HCT116 (cell line): ENCODE measurements at regions of chr5 and their contacts with region 1.

Region 1: DNA sequence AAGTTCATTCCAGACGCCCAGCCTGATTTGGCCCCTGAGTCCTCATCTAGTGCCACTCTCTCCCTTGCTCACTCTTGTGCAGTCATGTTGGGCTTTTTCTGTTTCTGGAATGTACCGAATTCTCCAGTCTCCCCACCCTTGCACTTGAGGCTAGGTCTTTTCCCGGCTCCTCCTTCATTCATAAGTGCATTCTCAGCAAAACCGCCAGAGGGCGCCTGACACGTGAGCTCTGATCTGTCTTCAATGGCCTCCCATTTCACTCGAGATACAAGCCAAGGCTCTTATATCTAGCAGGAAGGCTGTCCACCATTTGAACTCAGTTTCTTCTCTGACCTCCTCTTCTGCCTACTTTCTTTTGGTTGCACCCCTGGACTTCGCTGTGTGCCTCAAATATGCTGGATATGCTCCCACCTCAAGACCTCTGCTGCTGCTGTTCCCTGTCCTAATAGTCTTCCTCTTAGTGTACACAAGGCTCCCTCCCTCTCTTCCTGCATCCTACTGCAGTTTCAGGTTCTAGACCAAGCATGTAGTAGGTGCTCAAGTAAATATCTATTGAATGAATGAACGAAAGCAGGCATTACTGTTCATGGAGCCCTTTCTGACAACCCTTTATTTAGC is 568.1 kb upstream of the WWC1 start:
- DNase-seq: peak; percentile 72
- ATAC-seq: peak; percentile 98
- H3K4me3 ChIP-seq: no peak overlapping the region
- H3K27ac ChIP-seq: no peak overlapping the region
- H3K4me1 ChIP-seq: peaks cover 0 to 9% of the 10 kb centered on the region in 2 experiments; a peak in 2 of 4 replicates
- H3K27me3 ChIP-seq: no peaks in the 10 kb centered on the region
- CTCF ChIP-seq: peak; percentile 55 to 93 (median 88); a peak in 5 of 6 replicates
- POLR2A ChIP-seq: no peak
- RAD21 ChIP-seq: peak; percentile 66

Region 2: GRCh38 chr5:167699434-167699833 is 23.9 kb before region 1 on chr5:
- CTCF ChIA-PET with region 1: interaction called, 10 read pairs
- POLR2A ChIA-PET with region 1: no interaction called
- RAD21 ChIA-PET with region 1: no interaction called
- intact Hi-C with region 1: no loop called
- DNase-seq: peak; percentile 97
- ATAC-seq: peak; percentile 96
- H3K4me3 ChIP-seq: peak overlapping the region; percentile 15 to 22; a peak in 3 of 4 replicates
- H3K27ac ChIP-seq: peak overlapping the region; percentile 85; the same call in 1 of the 2 replicates
- H3K4me1 ChIP-seq: peaks cover 29 to 47% of the 10 kb centered on the region in 2 experiments
- H3K27me3 ChIP-seq: no peaks in the 10 kb centered on the region
- CTCF ChIP-seq: no peak
- POLR2A ChIP-seq: no peak
- RAD21 ChIP-seq: peak; percentile 32; the same call in 1 of the 2 replicates

Region 3: DNA sequence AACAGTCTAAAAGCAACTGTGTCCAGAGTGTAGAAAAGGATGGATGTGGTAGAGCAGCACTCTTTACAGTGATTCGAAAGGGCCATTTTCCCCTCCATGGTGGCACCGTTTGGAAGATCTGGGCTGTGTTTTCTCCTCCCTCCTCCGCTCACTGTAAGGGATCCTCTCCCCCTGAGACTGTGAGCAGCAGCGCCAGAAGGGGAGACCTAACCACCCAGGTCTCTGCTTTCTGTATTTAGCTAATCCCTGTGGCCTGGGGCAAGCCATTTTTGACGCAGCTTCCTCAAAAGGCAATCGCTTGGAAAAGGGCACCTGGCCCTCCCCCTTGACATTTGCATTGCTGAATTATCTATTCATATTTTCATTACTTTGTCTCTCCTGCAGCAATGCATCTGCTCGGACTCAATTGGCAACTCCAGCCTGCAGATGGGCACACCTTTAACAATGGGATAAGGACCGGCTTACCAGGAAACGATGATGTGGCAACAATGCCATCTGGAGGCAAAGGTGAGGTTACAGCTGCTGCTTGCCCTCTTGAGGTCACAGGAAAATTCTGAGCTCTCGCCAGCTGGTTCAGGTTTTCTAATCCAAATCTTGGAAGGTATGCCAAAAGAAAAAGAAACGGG is 323.8 kb after region 1 on chr5:
- CTCF ChIA-PET with region 1: interaction called, 7 read pairs
- POLR2A ChIA-PET with region 1: no interaction called
- RAD21 ChIA-PET with region 1: no interaction called
- intact Hi-C with region 1: loop called (anchors 1 kb)
- DNase-seq: peak; percentile 41
- ATAC-seq: peak; percentile 93
- H3K4me3 ChIP-seq: no peak overlapping the region
- H3K27ac ChIP-seq: no peak overlapping the region
- H3K4me1 ChIP-seq: no peaks in the 10 kb centered on the region
- H3K27me3 ChIP-seq: peaks cover 16% of the 10 kb centered on the region; the same call in 1 of the 2 replicates
- CTCF ChIP-seq: peak; percentile 48 to 69 (median 55); a peak in 4 of 6 replicates
- POLR2A ChIP-seq: no peak
- RAD21 ChIP-seq: peak; percentile 73